Posterior vena cava (tissue), 2 donors: ENCODE measurements at regions of chr7 and their contacts with region 1.

Region 1: DNA sequence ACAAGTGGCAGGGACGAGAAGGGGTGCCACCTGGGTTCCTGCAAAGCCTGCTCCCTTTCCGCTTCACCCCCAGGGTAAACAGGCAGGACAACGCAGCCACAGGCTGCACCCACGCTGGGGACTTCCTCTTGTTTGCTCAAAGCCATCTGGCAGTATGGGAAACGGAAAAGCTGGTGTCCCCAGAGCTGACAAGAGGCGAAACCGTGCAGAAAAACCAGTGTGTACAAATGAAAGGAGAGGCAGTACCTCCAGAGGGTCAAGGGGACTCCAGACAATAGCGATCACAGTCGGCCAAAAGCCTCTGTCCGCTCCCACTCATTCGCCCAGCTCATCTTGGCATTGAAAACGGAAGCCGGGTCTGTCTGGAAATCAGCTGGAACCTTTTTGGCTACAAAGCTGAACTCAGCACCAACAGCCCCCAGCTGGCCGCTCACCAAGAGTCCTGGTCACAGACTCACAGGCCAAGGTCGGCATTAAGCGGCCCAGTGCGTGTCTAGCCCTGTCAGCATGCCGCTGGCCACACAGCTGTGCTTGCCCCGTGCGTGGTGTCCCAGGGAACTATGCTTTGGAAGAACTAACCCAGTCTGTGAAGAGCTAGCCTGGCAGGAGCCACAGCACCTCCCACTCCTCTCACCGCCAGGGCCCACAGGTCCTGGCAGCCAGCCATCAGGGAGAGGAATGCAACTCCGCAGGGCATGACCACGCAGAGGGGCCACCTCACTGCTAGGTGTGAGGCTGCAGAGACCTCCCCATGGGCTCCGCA is 10.4 kb downstream of the TNS3 start:
- DNase-seq: peak; percentile 96

Region 2: DNA sequence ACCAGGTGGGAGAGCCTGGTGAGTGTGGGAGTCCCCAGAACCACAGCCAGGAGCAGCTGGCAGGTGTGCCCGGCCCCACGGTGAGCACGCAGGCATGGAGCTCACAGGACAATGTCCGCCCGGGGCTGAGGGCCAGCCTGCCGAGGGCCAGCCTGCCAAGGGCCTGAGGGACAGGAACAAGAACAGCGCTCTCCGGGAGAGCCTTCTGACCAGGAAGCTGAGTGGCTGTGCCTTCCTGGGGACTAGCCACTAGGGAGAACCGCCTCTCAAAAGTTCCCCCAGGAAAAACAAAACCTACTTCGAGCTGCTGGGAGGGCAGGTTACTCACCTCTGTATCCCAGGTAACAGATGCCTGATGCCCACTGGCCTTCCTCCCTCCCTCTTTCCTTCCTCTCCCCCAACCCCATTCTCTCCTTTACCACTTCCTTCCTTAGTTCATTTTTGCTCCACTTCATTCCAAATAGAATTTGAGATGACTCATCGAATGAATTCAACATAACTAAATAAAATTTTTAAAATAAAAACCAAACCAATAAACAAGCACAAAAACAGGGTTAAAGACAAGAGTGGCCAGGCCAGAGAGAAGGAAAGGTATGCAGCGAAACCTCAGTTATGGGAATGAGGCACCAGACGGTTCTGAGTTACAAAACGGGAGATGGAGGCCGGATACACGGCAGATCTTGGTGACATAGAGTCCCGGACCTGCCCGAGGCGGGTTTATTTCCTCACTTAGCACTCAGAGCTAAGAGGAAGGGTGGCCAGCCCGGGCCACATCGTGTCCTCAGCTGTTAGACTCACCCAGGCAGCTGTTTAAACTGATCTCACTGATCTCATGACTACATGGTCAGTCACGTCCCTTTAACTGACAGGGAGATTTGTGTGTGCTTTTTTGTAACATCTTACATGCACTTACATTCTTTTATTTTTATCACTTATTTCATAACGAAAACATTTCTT is 118.1 kb before region 1 on chr7:
- intact Hi-C with region 1: loop called in 1 of 2 experiments (anchors 10 kb)
- DNase-seq: peak; percentile 92

Region 3: GRCh38 chr7:47596502-47597202 is 25.1 kb after region 1 on chr7:
- intact Hi-C with region 1: loop called in 1 of 2 experiments (anchors 1 kb)
- DNase-seq: no peak

Region 4: GRCh38 chr7:47818796-47819606 is 247.5 kb after region 1 on chr7:
- intact Hi-C with region 1: no loop called
- DNase-seq: no peak